Heart left ventricle (tissue), 16 donors: ENCODE measurements at regions of chr6 and their contacts with region 1.

Region 1: GRCh38 chr6:133553652-133554051 is 312.5 kb downstream of the EYA4 start:
- DNase-seq: peak in 2 of 5 donors; percentile 23 to 33
- ATAC-seq: peak in 3 of 4 donors; percentile 61 to 75 (median 63)
- H3K4me3 ChIP-seq: no peak overlapping the region
- H3K27ac ChIP-seq: no peak overlapping the region
- H3K4me1 ChIP-seq: peaks cover 0 to 16% (median 4%) of the 10 kb centered on the region in 12 donors
- H3K27me3 ChIP-seq: no peaks in the 10 kb centered on the region
- CTCF ChIP-seq: peak; percentile 33 to 70 (median 56)
- POLR2A ChIP-seq: no peak

Region 2: GRCh38 chr6:132530293-132530974 is 1023.2 kb before region 1 on chr6:
- intact Hi-C with region 1: loop called in 1 of 10 experiments (anchors 10 kb)
- DNase-seq: peak in 4 of 5 donors; percentile 26 to 58 (median 46)
- ATAC-seq: peak in 3 of 4 donors; percentile 44 to 72 (median 71)
- H3K4me3 ChIP-seq: no peak overlapping the region
- H3K27ac ChIP-seq: no peak overlapping the region
- H3K4me1 ChIP-seq: no peaks in the 10 kb centered on the region
- H3K27me3 ChIP-seq: peaks cover 0 to 10% (median 0%) of the 10 kb centered on the region in 9 donors
- CTCF ChIP-seq: peak; percentile 74 to 96 (median 86)
- POLR2A ChIP-seq: no peak

Region 3: GRCh38 chr6:132669690-132670291 is 883.9 kb before region 1 on chr6:
- intact Hi-C with region 1: loop called in 2 of 10 experiments (anchors 10 kb)
- DNase-seq: no peak
- ATAC-seq: peak; percentile 37 to 73 (median 54)
- H3K4me3 ChIP-seq: no peak overlapping the region
- H3K27ac ChIP-seq: peak overlapping the region in 1 of 12 donors; percentile 42
- H3K4me1 ChIP-seq: peaks cover 0 to 4% (median 0%) of the 10 kb centered on the region in 12 donors
- H3K27me3 ChIP-seq: peaks cover 0 to 3% (median 0%) of the 10 kb centered on the region in 9 donors
- CTCF ChIP-seq: peak; percentile 26 to 70 (median 49)
- POLR2A ChIP-seq: no peak

Region 4: DNA sequence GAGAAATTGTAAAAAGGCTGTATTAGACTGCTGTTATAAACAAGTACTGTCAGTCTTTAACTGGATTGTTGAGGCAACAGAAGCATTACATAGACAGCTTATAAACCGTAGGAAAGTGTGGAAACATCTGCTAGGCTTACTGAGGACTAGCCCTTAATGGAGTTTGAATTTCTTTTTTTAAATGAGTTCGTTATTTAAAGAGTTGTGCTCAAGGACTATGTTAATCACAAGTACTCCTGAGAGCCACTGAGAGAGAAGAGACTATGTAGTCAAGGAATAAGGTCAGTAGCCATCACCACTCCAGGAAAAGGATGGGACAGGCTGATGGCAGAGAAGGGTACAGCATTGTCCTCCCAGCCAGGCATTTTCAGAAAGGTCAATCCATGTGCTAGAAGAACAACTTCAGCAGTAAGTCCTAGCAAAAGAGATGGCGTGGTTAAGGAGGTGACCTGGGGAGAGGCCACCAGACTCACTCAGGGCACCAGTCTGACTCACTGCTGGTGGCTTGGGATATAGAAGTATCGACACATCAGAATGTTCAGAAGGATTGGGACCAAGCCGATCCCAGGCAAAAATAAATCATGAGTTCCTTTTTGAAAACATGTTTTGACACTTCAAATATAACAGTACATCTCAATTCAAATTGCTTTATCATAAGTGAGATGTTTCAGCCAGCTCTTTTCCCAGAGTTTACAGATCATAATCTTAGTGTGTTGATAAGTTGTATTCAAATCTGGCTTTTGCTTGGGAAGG is 732.8 kb before region 1 on chr6:
- intact Hi-C with region 1: loop called in 2 of 10 experiments (anchors 5 to 10 kb)
- DNase-seq: no peak
- ATAC-seq: peak in 2 of 4 donors; percentile 35 to 54
- H3K4me3 ChIP-seq: no peak overlapping the region
- H3K27ac ChIP-seq: peak overlapping the region in 2 of 12 donors; percentile 10 to 40
- H3K4me1 ChIP-seq: peaks cover 0 to 28% (median 18%) of the 10 kb centered on the region in 12 donors
- H3K27me3 ChIP-seq: no peaks in the 10 kb centered on the region
- CTCF ChIP-seq: no peak
- POLR2A ChIP-seq: no peak

Region 5: GRCh38 chr6:132830334-132830751 is 723.3 kb before region 1 on chr6:
- intact Hi-C with region 1: loop called (anchors 2 to 10 kb)
- DNase-seq: no peak
- ATAC-seq: no peak
- H3K4me3 ChIP-seq: no peak overlapping the region
- H3K27ac ChIP-seq: no peak overlapping the region
- H3K4me1 ChIP-seq: no peaks in the 10 kb centered on the region
- H3K27me3 ChIP-seq: no peaks in the 10 kb centered on the region
- CTCF ChIP-seq: peak in 10 of 12 donors; percentile 20 to 59 (median 48)
- POLR2A ChIP-seq: no peak

Region 6: DNA sequence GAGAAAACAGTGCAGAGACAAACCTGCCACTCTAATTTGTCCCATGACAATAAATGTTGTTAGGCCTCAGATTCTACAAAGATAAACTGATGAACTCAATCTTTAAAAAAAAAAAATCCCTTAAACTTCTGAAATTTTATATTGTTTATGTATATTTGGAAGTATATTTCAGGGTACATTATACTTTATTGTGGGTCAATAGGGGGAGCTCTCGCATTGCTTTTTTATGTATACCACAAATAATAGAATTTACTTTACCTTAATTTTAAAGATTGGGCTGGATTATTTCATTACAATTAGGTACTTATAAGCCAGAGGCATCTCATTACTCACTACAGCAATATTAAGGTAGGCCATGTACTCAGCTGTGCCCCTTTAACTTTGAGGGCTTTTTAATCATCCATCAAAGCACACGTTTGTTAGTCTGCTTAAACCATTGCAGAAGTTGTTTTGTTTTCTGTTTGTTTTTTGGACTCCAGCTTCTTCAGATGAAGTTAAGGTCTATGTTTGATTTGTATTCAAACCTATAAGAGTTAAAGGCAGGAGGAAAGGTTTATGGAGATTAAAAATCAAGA is 368.8 kb before region 1 on chr6:
- intact Hi-C with region 1: loop called in 7 of 10 experiments (anchors 2 to 10 kb)
- DNase-seq: no peak
- ATAC-seq: no peak
- H3K4me3 ChIP-seq: no peak overlapping the region
- H3K27ac ChIP-seq: no peak overlapping the region
- H3K4me1 ChIP-seq: no peaks in the 10 kb centered on the region
- H3K27me3 ChIP-seq: no peaks in the 10 kb centered on the region
- CTCF ChIP-seq: peak; percentile 25 to 67 (median 52)
- POLR2A ChIP-seq: no peak

Region 7: GRCh38 chr6:133191323-133191722 is 362.3 kb before region 1 on chr6:
- intact Hi-C with region 1: loop called in 5 of 10 experiments (anchors 2 to 10 kb)
- DNase-seq: no peak
- ATAC-seq: no peak
- H3K4me3 ChIP-seq: no peak overlapping the region
- H3K27ac ChIP-seq: no peak overlapping the region
- H3K4me1 ChIP-seq: peaks cover 0 to 6% (median 0%) of the 10 kb centered on the region in 12 donors
- H3K27me3 ChIP-seq: no peaks in the 10 kb centered on the region
- CTCF ChIP-seq: no peak
- POLR2A ChIP-seq: no peak

Region 8: GRCh38 chr6:133487174-133487573 is 66.5 kb before region 1 on chr6:
- intact Hi-C with region 1: no loop called
- DNase-seq: peak in 2 of 5 donors; percentile 10 to 57
- ATAC-seq: peak in 2 of 4 donors; percentile 49 to 67
- H3K4me3 ChIP-seq: no peak overlapping the region
- H3K27ac ChIP-seq: no peak overlapping the region
- H3K4me1 ChIP-seq: peaks cover 0 to 4% (median 0%) of the 10 kb centered on the region in 12 donors
- H3K27me3 ChIP-seq: no peaks in the 10 kb centered on the region
- CTCF ChIP-seq: no peak
- POLR2A ChIP-seq: no peak

Region 9: DNA sequence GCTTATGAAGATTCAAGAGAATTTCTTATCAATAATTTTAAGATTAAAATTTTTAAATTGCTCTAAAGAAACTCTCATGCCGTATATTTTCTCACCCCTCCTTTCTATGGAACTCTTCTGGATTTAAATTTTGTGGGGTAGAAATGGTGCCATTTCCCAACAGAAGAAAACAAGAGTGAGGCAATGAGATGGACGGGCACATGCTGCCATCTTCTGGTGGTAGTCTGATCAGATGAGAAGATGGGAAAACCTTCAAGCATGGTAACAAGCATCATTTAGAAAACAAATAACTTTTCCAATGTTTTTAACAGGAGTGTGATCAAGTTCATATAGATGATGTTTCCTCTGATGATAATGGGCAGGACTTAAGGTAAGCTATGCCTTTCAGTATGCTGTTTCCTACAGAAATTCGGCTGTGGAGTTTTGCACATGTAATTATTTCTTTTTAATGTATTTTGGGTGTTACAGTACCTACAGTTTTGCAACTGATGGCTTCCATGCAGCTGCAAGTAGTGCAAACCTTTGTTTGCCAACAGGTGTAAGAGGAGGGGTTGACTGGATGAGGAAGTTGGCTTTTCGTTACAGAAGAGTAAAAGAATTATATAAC is 41.1 kb before region 1 on chr6:
- intact Hi-C with region 1: no loop called
- DNase-seq: peak in 2 of 5 donors; percentile 33 to 35
- ATAC-seq: no peak
- H3K4me3 ChIP-seq: no peak overlapping the region
- H3K27ac ChIP-seq: no peak overlapping the region
- H3K4me1 ChIP-seq: no peaks in the 10 kb centered on the region
- H3K27me3 ChIP-seq: peaks cover 0 to 2% (median 0%) of the 10 kb centered on the region in 9 donors
- CTCF ChIP-seq: peak; percentile 17 to 70 (median 58)
- POLR2A ChIP-seq: no peak

Region 10: DNA sequence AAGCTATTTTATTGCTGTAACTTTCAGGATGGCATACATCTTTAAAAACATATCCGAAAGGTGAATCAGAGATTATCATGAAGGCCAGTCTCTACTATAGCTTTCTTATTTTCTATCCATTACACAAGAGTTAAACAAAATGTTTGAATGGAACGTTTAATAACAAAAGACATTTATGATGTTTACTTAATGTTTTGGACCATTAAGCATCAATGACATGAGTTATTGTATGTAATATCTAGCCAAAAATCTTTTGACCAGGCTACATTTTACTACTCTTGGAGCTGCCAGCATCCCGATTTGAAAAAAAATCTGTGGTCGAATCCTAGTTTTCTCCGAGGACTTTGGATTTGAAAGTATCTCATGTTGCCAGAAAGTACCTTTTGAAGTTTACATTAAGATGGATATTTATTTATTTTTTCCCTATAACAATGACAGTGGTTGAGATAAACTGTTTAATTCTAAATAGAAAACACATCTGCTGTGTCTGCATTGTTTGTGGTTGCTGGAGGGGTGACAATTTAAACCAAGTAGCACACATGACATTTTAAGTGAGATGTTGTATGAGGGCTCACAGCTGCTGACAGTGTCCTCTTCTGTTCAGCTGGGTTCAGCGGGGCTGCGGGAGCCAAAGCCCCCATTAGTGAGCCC is 41.6 kb after region 1 on chr6:
- intact Hi-C with region 1: no loop called
- DNase-seq: no peak
- ATAC-seq: no peak
- H3K4me3 ChIP-seq: no peak overlapping the region
- H3K27ac ChIP-seq: no peak overlapping the region
- H3K4me1 ChIP-seq: no peaks in the 10 kb centered on the region
- H3K27me3 ChIP-seq: no peaks in the 10 kb centered on the region
- CTCF ChIP-seq: no peak
- POLR2A ChIP-seq: no peak